ENCODE measurements at regions of chr10 and their contacts with region 1.

Region 1: GRCh38 chr10:35172574-35172973 is 45.9 kb downstream of the CREM start:
- DNase-seq: no peak
- H3K4me3 ChIP-seq: no peak overlapping the region
- CTCF ChIP-seq: no peak

Region 2: DNA sequence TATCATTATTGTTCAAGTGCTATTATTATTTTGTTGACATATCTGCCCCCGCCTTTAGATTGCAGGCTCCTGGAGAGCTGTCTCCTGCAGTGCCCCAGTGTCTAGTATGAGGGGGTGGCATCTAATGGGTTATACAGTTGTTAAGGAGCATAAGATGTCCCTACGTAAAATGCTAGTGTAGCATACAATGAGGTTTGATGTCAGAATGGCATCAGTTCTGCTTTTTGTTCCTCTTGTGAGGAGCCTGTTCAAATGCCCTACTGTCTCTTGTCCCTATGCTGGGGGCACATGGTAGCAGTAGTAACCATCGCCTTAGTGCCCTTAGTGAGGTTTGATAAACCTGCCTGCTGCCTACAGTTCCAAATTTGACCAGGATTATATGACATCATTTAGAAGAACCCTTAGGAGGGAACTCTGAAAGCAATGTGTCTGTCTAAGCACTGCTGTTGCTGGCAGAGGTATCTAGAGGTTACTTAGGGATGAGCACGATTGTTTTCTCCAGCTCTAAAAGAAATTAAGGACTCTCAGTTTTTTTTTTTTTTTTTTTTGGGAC is 36.2 kb before region 1 on chr10:
- in situ Hi-C with region 1: loop called (anchors 5 kb)
- DNase-seq: no peak
- H3K4me3 ChIP-seq: no peak overlapping the region
- CTCF ChIP-seq: no peak